Motor neuron (in vitro differentiated cells): ENCODE measurements at regions of chr15 and their contacts with region 1.

Region 1: DNA sequence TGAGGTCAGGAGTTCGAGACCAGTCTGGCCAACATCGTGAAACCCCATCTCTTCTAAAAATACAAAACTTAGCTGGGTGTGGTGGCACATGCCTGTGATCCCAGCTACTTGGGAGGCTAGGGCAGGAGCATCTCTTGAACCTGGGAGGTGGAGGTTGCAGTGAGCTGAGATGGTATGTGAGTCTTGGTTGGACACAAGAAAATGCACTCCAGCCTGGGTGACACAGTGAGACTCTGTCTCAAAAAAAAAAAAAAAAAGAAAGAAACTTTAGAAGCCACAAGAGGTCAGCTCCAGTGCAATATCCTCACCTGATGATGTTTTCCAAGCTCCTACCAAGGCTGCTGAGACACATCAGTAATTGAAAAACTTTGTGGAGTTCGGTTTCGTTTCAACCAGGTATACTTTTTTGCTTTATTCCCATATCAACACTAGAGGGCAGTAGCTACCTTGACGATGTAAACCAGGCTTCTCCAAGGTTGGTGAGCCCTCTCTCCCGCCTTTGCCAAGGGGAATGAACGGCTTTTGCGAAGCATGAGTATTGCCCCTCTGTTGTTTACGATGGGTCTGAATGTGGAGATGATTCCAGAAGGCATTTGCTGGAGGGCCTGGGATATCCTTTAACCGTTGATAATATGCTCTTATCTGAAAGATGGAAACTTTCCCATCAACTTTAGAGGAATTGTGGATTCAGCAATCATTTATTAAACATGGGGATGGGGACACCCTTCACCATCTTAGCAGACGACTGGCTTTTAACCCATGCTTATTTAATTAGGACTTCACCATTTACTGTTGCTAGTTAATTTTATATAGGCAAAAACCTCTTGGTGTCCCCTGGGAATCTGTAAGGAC is 202.8 kb downstream of the SV2B start:
- ATAC-seq: peak; percentile 50 to 86 (median 62)
- H3K4me3 ChIP-seq: no peak overlapping the region
- H3K27ac ChIP-seq: no peak overlapping the region
- H3K4me1 ChIP-seq: peaks cover 0 to 4% of the 10 kb centered on the region in 2 donors

Region 2: DNA sequence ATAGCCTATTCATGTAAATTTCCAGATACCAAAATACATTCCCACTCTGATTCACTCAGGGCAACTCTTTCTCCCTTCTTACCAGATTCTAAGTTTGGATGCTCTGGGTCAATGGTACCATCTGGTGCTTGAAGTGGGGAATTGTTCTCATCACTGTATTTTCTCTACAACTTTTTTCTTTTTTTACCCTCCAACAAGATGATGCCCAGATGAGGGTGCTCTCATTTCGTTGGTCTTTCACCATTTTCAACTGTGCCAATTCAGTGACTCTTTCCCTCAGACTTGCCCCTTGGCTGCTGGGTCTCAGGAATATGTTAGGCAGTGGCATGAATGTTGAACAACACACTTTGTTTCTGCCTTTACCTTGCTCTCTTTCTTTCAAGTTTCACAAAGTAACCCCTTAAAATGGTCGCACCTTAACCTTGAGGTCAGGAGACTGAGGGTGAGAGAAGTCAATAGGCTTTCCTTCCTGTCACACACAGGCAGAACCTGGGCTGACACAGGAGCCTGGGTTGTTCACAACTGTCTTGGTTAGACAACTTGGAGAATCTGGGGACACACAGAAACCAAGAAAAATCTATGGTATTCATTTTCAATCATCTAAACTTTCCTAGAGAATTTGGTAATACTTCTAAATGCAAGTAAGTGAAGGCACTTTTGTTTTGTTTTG is 220.0 kb after region 1 on chr15:
- in situ Hi-C with region 1: loop called in 1 of 9 experiments (anchors 25 kb)
- ATAC-seq: peak in 2 of 8 experiments; percentile 78 to 85
- H3K4me3 ChIP-seq: no peak overlapping the region
- H3K27ac ChIP-seq: no peak overlapping the region
- H3K4me1 ChIP-seq: no peaks in the 10 kb centered on the region

Region 3: DNA sequence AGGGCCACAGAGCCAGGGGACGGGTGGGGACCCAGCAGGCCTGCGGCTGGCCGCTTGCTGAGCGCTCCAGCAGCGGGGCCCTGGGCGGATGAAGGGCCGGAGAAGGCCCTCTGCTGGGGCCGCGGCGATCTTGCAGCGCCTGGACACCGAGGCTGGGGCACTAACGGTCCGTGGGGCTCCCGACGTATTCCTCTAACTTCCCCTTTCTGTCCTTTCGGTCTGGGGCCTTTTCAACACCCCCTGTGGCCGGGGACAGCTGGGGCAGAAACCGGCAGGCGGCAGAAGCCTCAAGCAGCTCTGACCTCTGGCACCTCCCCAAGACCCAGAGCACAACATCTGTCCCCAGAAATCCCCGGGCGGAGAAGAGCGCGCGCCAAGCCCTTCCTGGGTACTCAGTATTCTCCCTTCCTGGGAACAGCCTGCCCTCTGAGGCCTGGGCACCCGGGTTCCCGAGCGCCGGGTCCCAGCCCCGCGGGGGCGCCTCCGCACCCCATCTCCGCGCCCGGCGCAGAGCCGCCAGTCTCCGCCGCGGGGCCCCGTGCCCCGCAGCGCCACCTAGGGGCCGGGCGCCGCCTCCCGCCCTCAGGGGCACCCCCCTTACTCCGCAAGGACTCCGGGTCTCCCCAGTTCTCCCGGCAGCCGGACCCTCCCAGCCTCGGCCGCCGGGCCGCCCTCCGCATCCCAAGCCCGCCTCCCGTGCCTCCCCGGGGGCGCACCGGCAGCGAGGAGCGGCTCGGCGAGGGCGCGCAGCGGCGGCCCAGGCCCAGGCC is 550.1 kb after region 1 on chr15:
- in situ Hi-C with region 1: loop called in 3 of 9 experiments (anchors 25 kb)
- ATAC-seq: peak; percentile 70 to 86 (median 80)
- H3K4me3 ChIP-seq: peak overlapping the region; percentile 55 to 94 (median 88)
- H3K27ac ChIP-seq: peak overlapping the region; percentile 62 to 78
- H3K4me1 ChIP-seq: peaks cover 21 to 25% of the 10 kb centered on the region in 2 donors